Naive thymus-derived CD4-positive, alpha-beta T cell (primary cell): ENCODE measurements at regions of chr4 and their contacts with region 1.

Region 1: DNA sequence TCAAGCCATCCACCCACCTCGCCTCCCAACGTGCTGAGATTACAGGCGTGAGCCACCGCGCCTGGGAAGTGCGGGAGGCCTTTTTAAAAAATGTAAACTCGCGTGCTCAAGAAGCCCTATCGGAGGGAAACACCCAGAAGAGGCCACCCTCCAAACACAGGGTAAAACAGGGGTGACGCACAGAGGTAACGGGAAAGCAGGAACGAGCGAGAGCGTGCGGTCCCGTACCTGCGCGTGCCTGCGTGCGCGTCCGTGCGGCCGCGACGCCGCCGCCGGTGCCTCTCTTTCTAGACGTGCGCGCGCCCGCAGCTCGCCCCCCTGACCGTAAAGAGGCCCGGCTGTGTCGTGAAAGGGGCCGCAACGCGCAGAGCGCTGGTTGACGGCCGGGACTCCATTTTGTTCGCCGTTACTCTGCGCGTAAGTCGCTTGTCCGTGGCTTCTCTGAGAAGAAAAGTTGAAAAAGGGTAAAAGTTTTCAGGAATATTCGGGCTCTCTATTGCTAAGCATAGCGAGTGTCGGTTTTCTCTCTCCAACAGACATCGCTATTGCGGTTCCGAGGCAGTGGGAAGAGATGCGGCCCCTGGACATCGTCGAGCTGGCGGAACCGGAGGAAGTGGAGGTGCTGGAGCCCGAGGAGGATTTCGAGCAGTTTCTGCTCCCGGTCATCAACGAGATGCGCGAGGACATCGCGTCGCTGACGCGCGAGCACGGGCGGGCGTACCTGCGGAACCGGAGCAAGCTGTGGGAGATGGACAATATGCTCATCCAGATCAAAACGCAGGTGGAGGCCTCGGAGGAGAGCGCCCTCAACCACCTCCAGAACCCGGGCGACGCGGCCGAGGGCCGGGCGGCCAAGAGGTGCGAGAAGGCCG is at the start of gene MRFAP1:
- DNase-seq: peak; percentile 84 to 97 (median 95)
- ATAC-seq: peak; percentile 94
- H3K4me3 ChIP-seq: peak within 1 kb of the TSS; percentile 100
- H3K4me3 Mint-ChIP-seq: peak within 1 kb of the TSS; percentile 94 to 100 (median 99)
- H3K27ac ChIP-seq: peak within 1 kb of the TSS; percentile 97
- H3K27ac Mint-ChIP-seq: peak within 1 kb of the TSS; percentile 99 to 100 (median 99)
- H3K4me1 ChIP-seq: peaks cover 13 to 23% of the 10 kb centered on the region in 2 donors
- H3K4me1 Mint-ChIP-seq: peaks cover 26 to 52% (median 37%) of the 10 kb centered on the region in 7 donors
- H3K27me3 ChIP-seq: no peaks in the 10 kb centered on the region
- H3K27me3 Mint-ChIP-seq: no peaks in the 10 kb centered on the region
- total RNA-seq, gene MRFAP1: 120 to 187 (median 139) TPM

Region 2: DNA sequence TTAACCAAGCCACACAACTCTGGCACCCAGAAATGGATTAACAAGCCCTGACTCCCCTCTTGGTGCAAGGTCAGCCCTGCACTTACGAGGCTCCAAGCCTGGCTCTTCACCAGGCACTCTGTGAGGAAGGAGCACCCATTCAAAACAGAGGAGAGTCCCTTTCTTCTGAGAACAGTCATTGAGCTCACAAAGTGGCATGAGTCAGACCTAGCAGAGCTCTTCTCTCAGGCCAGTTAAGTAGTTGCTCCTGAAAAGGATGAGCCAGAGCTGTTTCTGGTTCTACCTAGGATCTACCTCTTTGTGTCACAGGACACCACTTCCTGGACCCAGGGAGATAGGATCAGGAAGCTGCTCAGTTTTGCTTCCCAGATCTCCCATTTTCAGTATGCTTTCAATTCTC is 980.3 kb before region 1 on chr4:
- CTCF ChIA-PET with region 1: no interaction called
- POLR2A ChIA-PET with region 1: no interaction called
- intact Hi-C with region 1: no loop called
- DNase-seq: no peak
- ATAC-seq: no peak
- H3K4me3 ChIP-seq: no peak overlapping the region
- H3K4me3 Mint-ChIP-seq: no peak overlapping the region
- H3K27ac ChIP-seq: no peak overlapping the region
- H3K27ac Mint-ChIP-seq: no peak overlapping the region
- H3K4me1 ChIP-seq: no peaks in the 10 kb centered on the region
- H3K4me1 Mint-ChIP-seq: no peaks in the 10 kb centered on the region
- H3K27me3 ChIP-seq: no peaks in the 10 kb centered on the region
- H3K27me3 Mint-ChIP-seq: peaks cover 0 to 4% (median 4%) of the 10 kb centered on the region in 5 donors

Region 3: GRCh38 chr4:6565691-6566390 is 74.7 kb before region 1 on chr4:
- CTCF ChIA-PET with region 1: no interaction called
- POLR2A ChIA-PET with region 1: no interaction called
- intact Hi-C with region 1: loop called in 1 of 2 experiments (anchors 2 kb)
- DNase-seq: no peak
- ATAC-seq: no peak
- H3K4me3 ChIP-seq: no peak overlapping the region
- H3K4me3 Mint-ChIP-seq: peak overlapping the region in 5 of 10 donors; percentile 7 to 83 (median 25)
- H3K27ac ChIP-seq: no peak overlapping the region
- H3K27ac Mint-ChIP-seq: no peak overlapping the region
- H3K4me1 ChIP-seq: no peaks in the 10 kb centered on the region
- H3K4me1 Mint-ChIP-seq: peaks cover 0 to 11% (median 7%) of the 10 kb centered on the region in 7 donors
- H3K27me3 ChIP-seq: peaks cover 0 to 9% of the 10 kb centered on the region in 2 donors
- H3K27me3 Mint-ChIP-seq: peaks cover 33 to 57% (median 40%) of the 10 kb centered on the region in 5 donors

Region 4: DNA sequence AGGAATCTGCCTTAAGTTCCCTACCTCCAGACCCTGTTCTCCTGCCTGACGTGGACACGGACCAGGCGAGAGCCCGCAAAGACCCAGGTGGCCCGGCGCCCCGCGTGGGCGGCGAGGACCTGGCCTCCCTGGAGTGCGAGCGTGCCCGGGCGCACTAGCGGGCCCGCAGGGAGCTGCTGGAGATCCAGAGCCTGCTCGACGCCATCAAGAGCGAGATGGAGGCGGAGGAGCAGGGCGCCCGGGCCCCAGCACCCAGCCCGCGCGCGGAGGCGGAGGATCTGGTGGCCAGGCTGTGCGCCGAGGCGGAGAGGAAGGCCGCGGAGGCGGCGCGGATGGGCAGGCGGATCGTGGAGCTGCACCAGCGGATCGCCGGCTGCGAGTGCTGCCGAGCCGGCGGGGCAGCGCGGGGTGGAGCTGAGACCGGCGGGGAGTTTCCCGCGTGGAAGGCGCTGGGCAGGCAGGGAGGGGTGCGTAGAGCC is 18.1 kb after region 1 on chr4:
- CTCF ChIA-PET with region 1: interaction called, 3 read pairs
- POLR2A ChIA-PET with region 1: interaction called, 90 read pairs
- intact Hi-C with region 1: loop called in 1 of 2 experiments (anchors 1 kb)
- DNase-seq: peak; percentile 47 to 61 (median 55)
- ATAC-seq: peak; percentile 96
- H3K4me3 ChIP-seq: peak overlapping the region; percentile 51
- H3K4me3 Mint-ChIP-seq: peak overlapping the region; percentile 60 to 81 (median 76)
- H3K27ac ChIP-seq: peak overlapping the region; percentile 22
- H3K27ac Mint-ChIP-seq: peak overlapping the region in 6 of 9 donors; percentile 11 to 76 (median 44)
- H3K4me1 ChIP-seq: peaks cover 4 to 5% of the 10 kb centered on the region in 2 donors
- H3K4me1 Mint-ChIP-seq: peaks cover 0 to 15% (median 10%) of the 10 kb centered on the region in 7 donors
- H3K27me3 ChIP-seq: peaks cover 0 to 2% of the 10 kb centered on the region in 2 donors
- H3K27me3 Mint-ChIP-seq: peaks cover 0 to 43% (median 0%) of the 10 kb centered on the region in 5 donors

Region 5: DNA sequence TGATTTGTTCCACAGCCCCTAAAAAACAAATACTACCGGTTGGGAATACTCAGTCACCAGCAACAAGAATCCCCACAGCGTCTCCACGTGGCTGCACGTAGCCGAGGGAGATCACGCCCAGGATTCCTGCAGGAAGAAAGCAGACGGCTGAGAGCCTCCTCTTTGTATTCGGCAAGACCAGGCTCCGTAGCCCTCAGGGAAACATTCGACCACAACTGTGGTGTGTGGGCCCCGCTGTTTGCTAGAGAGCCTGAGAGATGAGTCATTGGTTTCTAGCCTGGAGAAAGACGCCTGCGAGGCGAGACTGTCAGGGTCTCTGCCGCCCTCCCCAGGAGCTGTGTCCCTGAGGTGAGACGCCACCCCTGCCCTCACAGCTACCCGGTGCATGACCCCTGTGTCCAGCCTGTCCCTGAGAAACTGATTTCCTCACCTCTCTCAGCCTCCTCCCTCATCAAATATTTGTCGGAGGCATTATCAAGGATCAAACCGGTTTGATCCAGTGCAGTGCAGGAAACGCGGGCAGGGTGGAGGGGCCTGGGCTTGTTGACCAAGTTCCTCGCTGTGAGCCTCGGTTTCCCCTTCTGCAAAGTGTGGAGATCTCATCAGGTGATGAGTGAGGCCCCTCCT is 48.5 kb after region 1 on chr4:
- CTCF ChIA-PET with region 1: interaction called, 5 read pairs
- POLR2A ChIA-PET with region 1: interaction called, 26 read pairs
- intact Hi-C with region 1: loop called in 1 of 2 experiments (anchors 1 kb)
- DNase-seq: peak in 3 of 9 donors; percentile 18 to 79 (median 62)
- ATAC-seq: peak; percentile 79
- H3K4me3 ChIP-seq: peak overlapping the region; percentile 43
- H3K4me3 Mint-ChIP-seq: peak overlapping the region in 9 of 10 donors; percentile 16 to 92 (median 66)
- H3K27ac ChIP-seq: peak overlapping the region; percentile 61
- H3K27ac Mint-ChIP-seq: peak overlapping the region; percentile 93 to 99 (median 96)
- H3K4me1 ChIP-seq: peaks cover 53 to 66% of the 10 kb centered on the region in 2 donors
- H3K4me1 Mint-ChIP-seq: peaks cover 38 to 82% (median 64%) of the 10 kb centered on the region in 7 donors
- H3K27me3 ChIP-seq: no peaks in the 10 kb centered on the region
- H3K27me3 Mint-ChIP-seq: no peaks in the 10 kb centered on the region

Region 6: GRCh38 chr4:6716018-6716911 is 75.7 kb after region 1 on chr4 and contains the start of gene BLOC1S4:
- CTCF ChIA-PET with region 1: interaction called, 4 read pairs
- POLR2A ChIA-PET with region 1: interaction called, 99 read pairs
- intact Hi-C with region 1: loop called (anchors 1 kb)
- DNase-seq: peak; percentile 86 to 95 (median 91)
- ATAC-seq: peak; percentile 92
- H3K4me3 ChIP-seq: peak within 1 kb of the TSS; percentile 86
- H3K4me3 Mint-ChIP-seq: peak within 1 kb of the TSS; percentile 89 to 99 (median 95)
- H3K27ac ChIP-seq: peak within 1 kb of the TSS; percentile 90
- H3K27ac Mint-ChIP-seq: peak within 1 kb of the TSS; percentile 94 to 100 (median 97)
- H3K4me1 ChIP-seq: peaks cover 19 to 20% of the 10 kb centered on the region in 2 donors
- H3K4me1 Mint-ChIP-seq: peaks cover 22 to 52% (median 36%) of the 10 kb centered on the region in 7 donors
- H3K27me3 ChIP-seq: no peaks in the 10 kb centered on the region
- H3K27me3 Mint-ChIP-seq: peaks cover 0 to 8% (median 0%) of the 10 kb centered on the region in 5 donors
- total RNA-seq, gene BLOC1S4: 18.7 to 45.9 (median 25.0) TPM

Region 7: GRCh38 chr4:7042697-7043464 is 402.4 kb after region 1 on chr4 and contains the start of gene TADA2B:
- CTCF ChIA-PET with region 1: no interaction called
- POLR2A ChIA-PET with region 1: interaction called, 15 read pairs
- intact Hi-C with region 1: loop called (anchors 1 kb)
- DNase-seq: peak; percentile 79 to 99 (median 88)
- ATAC-seq: peak; percentile 89
- H3K4me3 ChIP-seq: peak within 1 kb of the TSS; percentile 84
- H3K4me3 Mint-ChIP-seq: peak within 1 kb of the TSS; percentile 90 to 95 (median 92)
- H3K27ac ChIP-seq: peak within 1 kb of the TSS; percentile 85
- H3K27ac Mint-ChIP-seq: peak within 1 kb of the TSS; percentile 80 to 92 (median 89)
- H3K4me1 ChIP-seq: peaks cover 33 to 40% of the 10 kb centered on the region in 2 donors
- H3K4me1 Mint-ChIP-seq: peaks cover 38 to 58% (median 52%) of the 10 kb centered on the region in 7 donors
- H3K27me3 ChIP-seq: no peaks in the 10 kb centered on the region
- H3K27me3 Mint-ChIP-seq: peaks cover 0 to 15% (median 0%) of the 10 kb centered on the region in 5 donors
- total RNA-seq, gene TADA2B: 26.8 to 49.0 (median 41.5) TPM